ENCODE measurements at regions of chr16 and their contacts with region 1.

Region 1: DNA sequence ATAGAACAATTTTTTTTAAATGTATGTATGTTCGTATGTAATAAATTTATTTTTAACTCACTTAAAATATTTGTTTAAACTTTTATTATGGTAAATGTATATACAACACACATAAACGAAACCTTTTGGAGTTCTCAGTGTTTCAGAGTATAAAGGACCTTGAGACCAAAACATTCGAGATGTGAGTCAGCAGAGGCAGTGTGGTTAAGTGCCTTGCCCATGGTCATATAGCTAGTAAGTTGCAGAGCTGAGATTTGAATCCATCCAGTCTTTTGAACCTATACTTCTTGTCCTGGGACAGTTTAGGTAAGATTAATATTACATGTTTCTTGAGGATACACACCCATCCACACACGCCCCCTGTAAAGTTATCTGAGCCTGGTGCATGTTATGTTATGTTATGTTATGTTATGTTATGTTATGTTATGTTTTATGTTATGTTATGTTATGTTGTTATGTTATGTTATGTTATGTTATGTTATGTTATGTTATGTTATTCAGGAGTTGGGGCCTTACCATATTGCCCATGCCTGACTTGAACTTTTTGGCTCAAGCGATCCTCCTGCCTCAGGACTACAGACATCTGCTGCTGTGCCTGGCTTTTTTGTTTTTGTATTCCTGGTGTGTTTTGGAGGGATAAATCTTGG is 41.8 kb downstream of the TNRC6A start:
- DNase-seq: no peak
- H3K4me3 ChIP-seq: no peak overlapping the region
- H3K27ac ChIP-seq: peak overlapping the region in 3 of 4 donors; percentile 18 to 47 (median 32)
- H3K4me1 ChIP-seq: peaks cover 0 to 75% (median 48%) of the 10 kb centered on the region in 4 donors
- H3K27me3 ChIP-seq: no peaks in the 10 kb centered on the region
- CTCF ChIP-seq: no peak
- EP300 ChIP-seq: no peak
- POLR2A ChIP-seq: no peak

Region 2: DNA sequence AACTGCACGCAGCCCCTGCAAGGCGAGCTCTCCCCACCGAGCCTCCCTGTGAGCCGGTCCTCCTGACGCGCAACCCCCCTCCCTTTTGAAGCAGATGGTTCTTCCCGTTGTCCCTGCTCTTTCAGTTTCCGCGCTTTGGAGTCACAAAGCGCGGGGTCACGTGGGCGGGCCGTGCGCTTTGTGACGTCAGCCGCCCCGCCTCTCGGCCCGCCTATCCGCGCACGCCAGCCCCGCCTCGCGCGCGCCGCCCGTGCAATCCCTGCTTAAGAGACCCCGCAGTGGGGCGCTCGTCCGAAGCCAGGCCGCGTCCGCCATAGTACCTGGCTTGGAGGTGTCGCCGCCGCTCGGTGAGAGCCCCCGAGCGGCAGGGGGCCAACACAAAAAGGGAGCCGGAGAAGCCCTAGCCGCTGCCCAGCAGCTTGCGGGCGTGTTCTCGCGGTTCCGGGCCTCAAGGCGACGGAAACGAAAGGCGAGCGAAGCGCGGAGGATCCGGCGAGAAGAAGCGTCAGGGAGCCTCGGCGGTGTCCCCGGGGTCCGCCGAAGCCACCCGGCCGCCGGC is 231.9 kb before region 1 on chr16 and contains the start of gene RBBP6:
- intact Hi-C with region 1: no loop called
- DNase-seq: peak; percentile 98
- H3K4me3 ChIP-seq: peak within 1 kb of the TSS; percentile 83 to 99 (median 94)
- H3K27ac ChIP-seq: peak within 1 kb of the TSS; percentile 99 to 100 (median 100)
- H3K4me1 ChIP-seq: peaks cover 0 to 32% (median 30%) of the 10 kb centered on the region in 4 donors
- H3K27me3 ChIP-seq: no peaks in the 10 kb centered on the region
- CTCF ChIP-seq: peak in 1 of 4 experiments; percentile 26
- EP300 ChIP-seq: peak in 2 of 4 donors; percentile 81 to 82
- POLR2A ChIP-seq: peak; percentile 98 to 99
- total RNA-seq, gene RBBP6: 48.7 to 105 (median 69.0) TPM

Region 3: GRCh38 chr16:24753437-24753836 is 17.8 kb before region 1 on chr16:
- intact Hi-C with region 1: loop called (anchors 2 kb)
- DNase-seq: no peak
- H3K4me3 ChIP-seq: no peak overlapping the region
- H3K27ac ChIP-seq: no peak overlapping the region
- H3K4me1 ChIP-seq: peaks cover 0 to 82% (median 67%) of the 10 kb centered on the region in 4 donors
- H3K27me3 ChIP-seq: no peaks in the 10 kb centered on the region
- CTCF ChIP-seq: no peak
- EP300 ChIP-seq: no peak
- POLR2A ChIP-seq: no peak

Measured in sigmoid colon (tissue), 7 donors.